HCT116 (cell line): ENCODE measurements at regions of chr22 and their contacts with region 1.

Region 1: DNA sequence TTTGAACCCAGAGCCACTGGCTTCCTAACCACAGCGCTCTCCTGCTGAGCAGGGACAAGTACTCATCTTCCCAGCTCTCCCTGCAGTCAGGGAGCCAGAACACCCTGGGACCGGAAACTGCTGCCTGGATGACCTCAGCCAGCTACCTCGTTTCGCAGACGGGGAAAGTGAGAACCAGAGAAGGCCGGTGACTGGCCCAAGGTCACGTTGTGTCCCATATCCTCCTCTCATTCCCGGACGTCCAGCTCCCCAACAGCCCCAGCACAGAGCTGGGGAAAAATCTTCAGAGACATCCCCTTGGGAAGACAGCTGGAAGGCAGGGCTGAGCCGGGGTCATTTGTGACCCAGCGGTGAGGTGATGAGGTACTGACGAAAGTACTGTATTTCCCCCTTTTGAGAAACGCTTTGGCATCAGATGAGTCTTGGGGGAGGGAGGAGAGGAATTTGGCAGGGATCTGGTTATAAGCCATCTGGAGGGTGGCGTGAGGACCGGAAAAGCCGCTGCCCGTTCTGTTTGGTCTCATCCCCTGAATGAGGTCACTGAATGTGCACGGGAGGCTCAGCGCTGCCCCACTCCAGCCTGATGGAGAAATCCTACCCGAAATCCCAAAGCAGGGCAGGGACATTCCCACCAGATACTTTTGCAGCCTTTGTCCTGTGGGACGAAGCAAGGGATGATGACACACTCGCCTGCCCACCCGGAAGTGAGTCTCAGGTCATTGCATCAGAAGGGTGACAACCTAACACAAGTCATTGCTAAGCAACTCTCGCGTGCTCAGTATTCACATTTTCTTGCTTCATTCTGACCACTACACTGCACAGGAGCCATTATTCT is 41.1 kb downstream of the LIF start:
- DNase-seq: no peak
- ATAC-seq: no peak
- H3K4me3 ChIP-seq: peak overlapping the region; percentile 28 to 30; a peak in 3 of 4 replicates
- H3K27ac ChIP-seq: peak overlapping the region; percentile 96
- H3K4me1 ChIP-seq: peaks cover 59 to 84% of the 10 kb centered on the region in 2 experiments
- H3K27me3 ChIP-seq: no peaks in the 10 kb centered on the region
- CTCF ChIP-seq: no peak
- POLR2A ChIP-seq: no peak
- RAD21 ChIP-seq: no peak

Region 2: GRCh38 chr22:29727131-29727523 is 478.4 kb before region 1 on chr22:
- CTCF ChIA-PET with region 1: no interaction called
- POLR2A ChIA-PET with region 1: no interaction called
- RAD21 ChIA-PET with region 1: no interaction called
- intact Hi-C with region 1: no loop called
- DNase-seq: no peak
- ATAC-seq: peak; percentile 79
- H3K4me3 ChIP-seq: no peak overlapping the region
- H3K27ac ChIP-seq: no peak overlapping the region
- H3K4me1 ChIP-seq: peaks cover 0 to 9% of the 10 kb centered on the region in 2 experiments; a peak in 2 of 4 replicates
- H3K27me3 ChIP-seq: no peaks in the 10 kb centered on the region
- CTCF ChIP-seq: peak in 2 of 3 experiments; percentile 25 to 27; a peak in 3 of 6 replicates
- POLR2A ChIP-seq: no peak
- RAD21 ChIP-seq: peak; percentile 64

Region 3: DNA sequence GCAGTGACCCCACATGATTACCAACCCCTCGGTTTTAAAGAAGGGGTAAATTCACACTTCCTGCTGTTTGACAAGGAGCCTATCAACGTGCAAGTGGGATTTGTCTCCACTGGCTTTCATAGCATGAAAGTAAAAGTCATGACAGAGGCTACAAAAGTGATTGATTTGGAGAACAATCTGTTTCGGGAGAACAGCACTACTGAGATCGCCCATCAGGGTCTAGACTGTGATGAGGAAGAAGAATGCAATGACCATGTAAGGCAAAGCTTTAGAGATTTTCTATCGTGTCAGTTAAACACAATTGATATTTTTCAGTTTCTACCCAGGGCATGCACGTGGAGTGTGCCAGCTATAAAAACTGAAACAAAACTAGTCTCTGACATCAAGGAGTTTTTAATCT is 83.5 kb before region 1 on chr22:
- CTCF ChIA-PET with region 1: no interaction called
- POLR2A ChIA-PET with region 1: interaction called, 15 read pairs
- RAD21 ChIA-PET with region 1: no interaction called
- intact Hi-C with region 1: no loop called
- DNase-seq: no peak
- ATAC-seq: no peak
- H3K4me3 ChIP-seq: no peak overlapping the region
- H3K27ac ChIP-seq: no peak overlapping the region
- H3K4me1 ChIP-seq: peaks cover 0 to 2% of the 10 kb centered on the region in 2 experiments; a peak in 1 of 4 replicates
- H3K27me3 ChIP-seq: no peaks in the 10 kb centered on the region
- CTCF ChIP-seq: no peak
- POLR2A ChIP-seq: no peak
- RAD21 ChIP-seq: no peak

Region 4: DNA sequence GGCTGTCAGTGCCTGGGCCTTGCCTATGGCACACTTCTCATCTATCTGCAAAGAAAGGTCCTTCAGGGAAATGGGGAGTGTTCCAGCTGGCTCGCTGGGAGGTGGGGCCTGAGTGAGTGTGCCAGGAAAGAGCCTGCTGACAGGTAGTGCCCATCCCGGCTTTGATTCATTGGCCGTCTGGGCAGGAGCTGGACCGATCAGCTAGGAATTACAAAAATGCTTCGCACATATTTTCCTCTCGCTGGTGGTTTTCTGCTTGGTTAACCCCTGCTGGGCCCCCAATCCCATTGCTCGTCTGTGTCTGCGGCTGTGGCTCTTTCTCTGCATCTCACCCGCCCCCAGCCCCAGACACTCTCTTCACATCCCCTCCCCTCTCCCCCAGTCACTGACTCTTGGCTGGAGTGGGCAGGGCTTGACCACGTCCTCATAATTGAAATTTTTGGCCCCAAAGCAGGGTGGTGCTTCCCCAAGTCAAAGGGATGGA is 30.2 kb after region 1 on chr22:
- CTCF ChIA-PET with region 1: no interaction called
- POLR2A ChIA-PET with region 1: interaction called, 61 read pairs
- RAD21 ChIA-PET with region 1: no interaction called
- intact Hi-C with region 1: no loop called
- DNase-seq: no peak
- ATAC-seq: peak; percentile 73
- H3K4me3 ChIP-seq: peak overlapping the region in 1 of 2 experiments; percentile 30; a peak in 2 of 4 replicates
- H3K27ac ChIP-seq: peak overlapping the region; percentile 53
- H3K4me1 ChIP-seq: peaks cover 43 to 86% of the 10 kb centered on the region in 2 experiments
- H3K27me3 ChIP-seq: no peaks in the 10 kb centered on the region
- CTCF ChIP-seq: no peak
- POLR2A ChIP-seq: no peak
- RAD21 ChIP-seq: no peak

Region 5: DNA sequence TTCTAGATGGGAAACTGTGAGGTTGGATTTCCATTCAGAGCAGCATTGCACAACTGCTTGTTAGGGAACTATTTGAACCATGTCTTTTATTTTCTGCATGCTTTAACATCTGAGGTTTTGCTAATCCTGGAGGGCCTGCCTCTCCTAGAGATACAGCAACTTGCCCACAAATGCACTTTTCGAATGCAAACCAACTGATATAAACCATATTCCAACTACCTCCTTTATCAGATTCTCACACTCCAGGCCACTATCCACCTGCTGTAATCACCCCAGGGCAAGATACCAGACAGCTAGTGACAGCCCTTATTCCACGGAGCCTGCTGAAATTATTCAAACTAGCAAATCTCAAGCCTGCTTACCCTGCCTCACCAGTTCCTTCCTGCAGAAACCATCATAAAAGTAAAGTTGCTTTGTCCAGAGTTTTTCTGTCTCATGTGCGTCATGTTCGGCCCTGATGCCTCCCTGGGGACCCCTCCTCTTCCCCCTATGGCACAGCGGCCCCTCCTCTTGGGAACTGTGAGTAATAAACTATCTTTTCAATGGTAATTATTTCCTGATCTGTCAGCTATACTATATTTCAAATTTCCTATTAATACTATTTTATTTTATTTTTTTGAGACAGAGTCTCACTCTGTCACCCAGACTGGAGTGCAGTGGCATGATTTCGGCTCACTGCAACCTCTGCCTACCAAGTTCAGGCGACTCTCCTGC is 318.4 kb after region 1 on chr22:
- CTCF ChIA-PET with region 1: no interaction called
- POLR2A ChIA-PET with region 1: no interaction called
- RAD21 ChIA-PET with region 1: no interaction called
- intact Hi-C with region 1: no loop called
- DNase-seq: no peak
- ATAC-seq: no peak
- H3K4me3 ChIP-seq: no peak overlapping the region
- H3K27ac ChIP-seq: no peak overlapping the region
- H3K4me1 ChIP-seq: no peaks in the 10 kb centered on the region
- H3K27me3 ChIP-seq: no peaks in the 10 kb centered on the region
- CTCF ChIP-seq: no peak
- POLR2A ChIP-seq: no peak
- RAD21 ChIP-seq: no peak